Heart right ventricle (tissue), 16 donors: ENCODE measurements at regions of chr14 and their contacts with region 1.

Region 1: GRCh38 chr14:65164068-65164824 is 61.9 kb upstream of the MAX start:
- DNase-seq: peak in 1 of 2 donors; percentile 40
- ATAC-seq: peak in 5 of 8 donors; percentile 44 to 67 (median 59)
- H3K4me3 ChIP-seq: no peak overlapping the region
- H3K27ac ChIP-seq: no peak overlapping the region
- H3K4me1 ChIP-seq: peaks cover 0 to 7% (median 0%) of the 10 kb centered on the region in 9 donors
- H3K27me3 ChIP-seq: peaks cover 0 to 8% (median 0%) of the 10 kb centered on the region in 7 donors
- CTCF ChIP-seq: peak; percentile 29 to 81 (median 69)

Region 2: GRCh38 chr14:65084554-65085505 is 79.4 kb before region 1 on chr14:
- intact Hi-C with region 1: no loop called
- DNase-seq: no peak
- ATAC-seq: peak in 6 of 8 donors; percentile 37 to 74 (median 62)
- H3K4me3 ChIP-seq: no peak overlapping the region
- H3K27ac ChIP-seq: peak overlapping the region in 8 of 10 donors; percentile 3 to 84 (median 54)
- H3K4me1 ChIP-seq: peaks cover 7 to 71% (median 62%) of the 10 kb centered on the region in 9 donors
- H3K27me3 ChIP-seq: no peaks in the 10 kb centered on the region
- CTCF ChIP-seq: no peak

Region 3: GRCh38 chr14:65824285-65824977 is 660.2 kb after region 1 on chr14:
- intact Hi-C with region 1: loop called in 9 of 10 experiments (anchors 2 to 10 kb)
- DNase-seq: peak in 1 of 2 donors; percentile 48
- ATAC-seq: peak in 7 of 8 donors; percentile 55 to 84 (median 71)
- H3K4me3 ChIP-seq: no peak overlapping the region
- H3K27ac ChIP-seq: no peak overlapping the region
- H3K4me1 ChIP-seq: no peaks in the 10 kb centered on the region
- H3K27me3 ChIP-seq: peaks cover 0 to 51% (median 41%) of the 10 kb centered on the region in 7 donors
- CTCF ChIP-seq: peak; percentile 81 to 95 (median 91)

Region 4: GRCh38 chr14:65832431-65833266 is 668.4 kb after region 1 on chr14:
- intact Hi-C with region 1: loop called in 6 of 10 experiments (anchors 5 to 10 kb)
- DNase-seq: no peak
- ATAC-seq: no peak
- H3K4me3 ChIP-seq: no peak overlapping the region
- H3K27ac ChIP-seq: no peak overlapping the region
- H3K4me1 ChIP-seq: peaks cover 0 to 7% (median 0%) of the 10 kb centered on the region in 9 donors
- H3K27me3 ChIP-seq: peaks cover 0 to 22% (median 17%) of the 10 kb centered on the region in 7 donors
- CTCF ChIP-seq: peak in 6 of 9 donors; percentile 15 to 33 (median 22)

Region 5: DNA sequence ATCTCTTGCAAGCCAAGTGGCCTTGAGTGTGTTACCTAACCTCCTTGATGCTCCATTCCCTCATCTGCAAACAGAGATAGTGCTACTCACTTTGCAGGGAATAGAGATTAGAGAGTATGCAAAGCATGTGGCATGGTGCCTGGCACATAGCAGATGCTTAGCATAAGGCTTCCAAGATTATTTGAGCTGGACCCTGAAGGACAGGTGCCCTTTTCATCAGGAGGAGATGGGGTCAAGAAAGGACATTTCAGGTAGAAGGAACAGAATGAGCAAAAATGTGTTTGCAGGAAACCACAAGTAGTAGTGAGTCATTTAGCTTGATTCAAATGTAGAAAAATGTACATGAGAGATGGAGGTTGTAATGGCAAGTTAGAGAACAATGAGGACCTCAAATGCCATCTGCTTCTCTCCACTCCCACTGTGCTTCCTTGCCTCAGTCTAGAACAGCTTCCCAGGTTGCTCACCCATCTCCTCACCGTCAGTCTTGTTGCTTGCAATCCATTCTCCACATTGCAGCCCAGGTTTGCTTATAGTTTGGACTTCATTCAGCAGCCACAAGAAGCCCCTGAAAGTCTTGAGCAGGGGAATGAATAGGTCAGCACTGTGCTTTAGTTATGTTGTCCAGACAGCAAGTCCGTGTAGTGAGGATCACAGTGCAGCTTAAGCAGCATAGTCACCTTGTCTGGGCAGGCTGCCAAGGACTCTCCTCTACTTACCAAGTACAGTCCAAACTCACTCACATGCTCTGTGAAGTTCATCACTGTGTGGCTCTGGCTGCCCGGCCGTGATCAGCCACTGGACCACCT is 785.7 kb after region 1 on chr14:
- intact Hi-C with region 1: loop called in 9 of 10 experiments (anchors 5 to 10 kb)
- DNase-seq: peak; percentile 37 to 39
- ATAC-seq: peak in 7 of 8 donors; percentile 29 to 86 (median 69)
- H3K4me3 ChIP-seq: no peak overlapping the region
- H3K27ac ChIP-seq: no peak overlapping the region
- H3K4me1 ChIP-seq: peaks cover 0 to 7% (median 0%) of the 10 kb centered on the region in 9 donors
- H3K27me3 ChIP-seq: peaks cover 0 to 8% (median 0%) of the 10 kb centered on the region in 7 donors
- CTCF ChIP-seq: no peak

Region 6: GRCh38 chr14:65958664-65959562 is 794.7 kb after region 1 on chr14:
- intact Hi-C with region 1: loop called in 9 of 10 experiments (anchors 2 to 10 kb)
- DNase-seq: no peak
- ATAC-seq: peak in 7 of 8 donors; percentile 19 to 69 (median 33)
- H3K4me3 ChIP-seq: no peak overlapping the region
- H3K27ac ChIP-seq: no peak overlapping the region
- H3K4me1 ChIP-seq: peaks cover 0 to 6% (median 0%) of the 10 kb centered on the region in 9 donors
- H3K27me3 ChIP-seq: peaks cover 0 to 14% (median 0%) of the 10 kb centered on the region in 7 donors
- CTCF ChIP-seq: peak; percentile 19 to 68 (median 56)

Region 7: GRCh38 chr14:66070509-66071319 is 906.5 kb after region 1 on chr14:
- intact Hi-C with region 1: loop called in 6 of 10 experiments (anchors 5 to 10 kb)
- DNase-seq: peak; percentile 23 to 30
- ATAC-seq: peak in 4 of 8 donors; percentile 28 to 63 (median 51)
- H3K4me3 ChIP-seq: no peak overlapping the region
- H3K27ac ChIP-seq: no peak overlapping the region
- H3K4me1 ChIP-seq: no peaks in the 10 kb centered on the region
- H3K27me3 ChIP-seq: peaks cover 0 to 15% (median 4%) of the 10 kb centered on the region in 7 donors
- CTCF ChIP-seq: peak; percentile 42 to 88 (median 77)

Region 8: GRCh38 chr14:66078006-66078405 is 913.8 kb after region 1 on chr14:
- intact Hi-C with region 1: loop called in 4 of 10 experiments (anchors 5 to 10 kb)
- DNase-seq: no peak
- ATAC-seq: no peak
- H3K4me3 ChIP-seq: no peak overlapping the region
- H3K27ac ChIP-seq: no peak overlapping the region
- H3K4me1 ChIP-seq: peaks cover 0 to 11% (median 0%) of the 10 kb centered on the region in 9 donors
- H3K27me3 ChIP-seq: peaks cover 0 to 6% (median 0%) of the 10 kb centered on the region in 7 donors
- CTCF ChIP-seq: no peak